Activated CD4-positive, alpha-beta T cell treated with anti-CD3 and anti-CD28 coated beads, Interleukin-2, amount 10 ng/mL, durations not matched to agents 24 days and 14 days (primary cell): ENCODE measurements at regions of chr12 and their contacts with region 1.

Region 1: GRCh38 chr12:27821259-27821973 is 41.4 kb upstream of the MANSC4 start:
- DNase-seq: peak; percentile 85
- H3K4me3 Mint-ChIP-seq: peak overlapping the region; percentile 6
- H3K27ac Mint-ChIP-seq: peak overlapping the region; percentile 87
- H3K4me1 Mint-ChIP-seq: peaks cover 36% of the 10 kb centered on the region
- H3K27me3 Mint-ChIP-seq: peaks cover 52% of the 10 kb centered on the region

Region 2: DNA sequence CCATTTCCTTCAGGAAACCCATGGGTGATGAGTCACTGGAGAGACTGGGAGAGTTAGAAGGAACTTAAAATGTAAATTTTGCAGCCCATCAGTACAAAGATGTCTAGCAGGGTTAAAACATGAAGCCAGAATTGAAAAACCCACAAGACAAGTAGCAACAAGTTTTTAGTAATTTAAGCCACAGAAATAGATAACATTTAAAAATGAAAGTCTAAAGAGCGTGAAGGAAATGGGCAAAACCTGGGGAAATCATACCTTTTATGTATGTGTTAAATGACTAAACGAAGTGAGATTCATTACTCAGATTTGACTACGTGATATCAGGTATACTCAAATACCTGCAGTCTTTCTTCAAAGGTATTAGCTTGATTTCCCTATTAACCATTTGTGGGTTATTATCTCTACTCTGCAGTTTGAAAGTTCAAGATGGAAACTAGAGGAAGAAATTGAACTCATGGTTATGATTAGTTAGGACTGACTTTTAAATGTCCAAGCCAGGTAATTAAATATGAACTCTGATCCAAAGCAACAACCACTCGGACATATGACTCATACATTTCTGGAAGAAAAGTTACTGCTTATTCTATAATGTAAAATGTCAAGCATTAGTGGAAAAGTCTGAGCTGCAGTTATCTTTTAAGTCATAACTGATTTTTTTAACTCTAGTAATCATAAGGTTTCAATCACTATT is 1072.5 kb before region 1 on chr12:
- intact Hi-C with region 1: loop called (anchors 2 kb)
- DNase-seq: no peak
- H3K4me3 Mint-ChIP-seq: peak overlapping the region; percentile 51
- H3K27ac Mint-ChIP-seq: peak overlapping the region; percentile 75
- H3K4me1 Mint-ChIP-seq: peaks cover 50% of the 10 kb centered on the region
- H3K27me3 Mint-ChIP-seq: no peaks in the 10 kb centered on the region

Region 3: DNA sequence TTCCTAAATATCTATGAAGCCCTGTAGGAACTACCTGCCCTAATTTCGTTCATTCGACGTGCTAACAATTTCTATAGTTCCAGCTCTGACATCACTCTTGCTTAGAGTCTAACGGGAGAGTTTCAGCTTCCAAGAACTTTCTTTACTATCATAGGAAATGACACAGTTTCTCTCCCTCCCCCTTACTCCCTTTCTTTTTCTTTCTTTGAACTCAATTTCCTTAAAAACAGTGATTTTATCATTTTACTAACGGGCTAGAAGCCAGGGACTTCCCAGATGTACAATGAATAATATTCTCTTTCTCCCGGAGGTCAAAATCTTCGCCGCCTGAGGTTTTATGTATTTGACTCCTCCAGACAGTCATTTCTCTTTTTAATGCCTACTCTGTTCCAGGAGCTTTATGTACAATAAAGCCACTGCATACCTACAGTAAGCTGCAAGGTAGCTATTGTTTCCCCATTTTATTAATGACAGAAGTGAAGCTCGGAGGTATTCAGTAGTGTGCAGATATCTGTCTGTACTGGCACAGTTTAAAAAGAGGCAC is 359.2 kb before region 1 on chr12:
- intact Hi-C with region 1: loop called (anchors 2 kb)
- DNase-seq: peak; percentile 60
- H3K4me3 Mint-ChIP-seq: peak overlapping the region; percentile 27
- H3K27ac Mint-ChIP-seq: peak overlapping the region; percentile 68
- H3K4me1 Mint-ChIP-seq: peaks cover 58% of the 10 kb centered on the region
- H3K27me3 Mint-ChIP-seq: no peaks in the 10 kb centered on the region

Region 4: DNA sequence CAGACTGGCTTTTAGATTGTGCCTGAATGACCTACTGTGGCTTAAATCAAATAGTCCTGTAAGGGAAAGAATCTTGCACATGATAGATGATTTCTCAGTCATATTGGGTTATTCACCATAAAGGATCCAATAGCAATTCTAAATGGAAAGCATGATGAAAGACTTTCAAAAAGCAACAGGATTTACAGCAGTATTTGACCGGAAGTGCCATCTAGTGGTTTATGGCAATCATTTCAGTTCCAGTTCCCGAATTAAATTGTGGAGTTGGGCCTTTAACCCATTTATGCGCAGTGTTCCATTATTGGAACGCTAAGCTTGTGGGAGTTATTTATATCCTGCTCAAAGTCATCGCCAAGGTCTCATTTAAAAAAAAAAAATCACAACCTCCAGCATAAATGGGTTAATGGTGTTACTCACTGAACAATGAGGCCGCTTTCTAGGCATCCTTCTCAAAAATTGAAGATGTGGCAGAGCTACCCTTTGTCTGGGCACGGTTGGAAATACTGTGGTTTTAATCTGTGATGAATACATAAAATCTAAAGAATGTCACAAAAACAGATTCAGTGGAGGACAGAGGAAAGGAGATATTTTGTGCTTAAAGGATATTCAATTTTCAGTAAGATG is 186.0 kb before region 1 on chr12:
- intact Hi-C with region 1: no loop called
- DNase-seq: peak; percentile 59
- H3K4me3 Mint-ChIP-seq: no peak overlapping the region
- H3K27ac Mint-ChIP-seq: no peak overlapping the region
- H3K4me1 Mint-ChIP-seq: peaks cover 10% of the 10 kb centered on the region
- H3K27me3 Mint-ChIP-seq: peaks cover 2% of the 10 kb centered on the region

Region 5: DNA sequence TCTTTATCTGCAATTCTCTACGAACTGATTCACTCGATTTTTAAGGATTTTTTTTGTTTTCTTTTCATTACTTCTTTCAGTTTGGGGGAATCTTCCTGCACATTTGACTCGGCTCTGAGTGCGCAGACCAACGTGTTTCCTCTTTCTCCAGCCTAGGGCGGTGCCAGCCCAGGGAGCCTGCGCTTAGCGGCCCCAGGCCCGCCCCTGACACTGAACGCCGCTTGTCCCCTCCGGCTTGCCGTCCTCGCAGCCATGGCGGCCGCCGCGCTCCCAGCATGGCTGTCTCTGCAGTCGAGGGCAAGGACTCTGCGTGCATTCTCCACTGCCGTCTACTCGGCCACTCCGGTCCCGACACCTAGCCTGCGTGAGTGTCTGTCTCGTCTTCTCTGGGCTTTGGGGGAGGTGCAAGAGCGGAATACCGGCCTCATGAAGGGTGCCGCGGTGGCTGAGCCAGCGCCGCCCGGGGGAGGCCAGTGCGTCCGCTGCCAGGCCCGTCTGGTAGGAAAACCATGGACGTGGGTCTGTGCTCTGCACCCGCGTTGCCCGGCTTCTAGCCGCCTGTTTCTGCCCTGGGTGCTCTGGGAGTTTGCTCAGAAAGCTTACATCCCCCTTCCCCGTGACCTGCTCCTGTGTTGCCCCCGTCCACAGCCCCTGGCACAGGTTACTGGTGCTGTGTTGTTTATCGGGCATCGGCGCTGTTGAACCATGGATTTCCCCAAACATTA is 110.7 kb before region 1 on chr12 and contains the start of gene MRPS35:
- intact Hi-C with region 1: loop called (anchors 1 kb)
- DNase-seq: peak; percentile 98
- H3K4me3 Mint-ChIP-seq: peak within 1 kb of the TSS; percentile 95
- H3K27ac Mint-ChIP-seq: peak within 1 kb of the TSS; percentile 91
- H3K4me1 Mint-ChIP-seq: peaks cover 31% of the 10 kb centered on the region
- H3K27me3 Mint-ChIP-seq: peaks cover 9% of the 10 kb centered on the region
- total RNA-seq, gene MRPS35: 57.7 and 58.1 TPM in 2 replicates

Region 6: DNA sequence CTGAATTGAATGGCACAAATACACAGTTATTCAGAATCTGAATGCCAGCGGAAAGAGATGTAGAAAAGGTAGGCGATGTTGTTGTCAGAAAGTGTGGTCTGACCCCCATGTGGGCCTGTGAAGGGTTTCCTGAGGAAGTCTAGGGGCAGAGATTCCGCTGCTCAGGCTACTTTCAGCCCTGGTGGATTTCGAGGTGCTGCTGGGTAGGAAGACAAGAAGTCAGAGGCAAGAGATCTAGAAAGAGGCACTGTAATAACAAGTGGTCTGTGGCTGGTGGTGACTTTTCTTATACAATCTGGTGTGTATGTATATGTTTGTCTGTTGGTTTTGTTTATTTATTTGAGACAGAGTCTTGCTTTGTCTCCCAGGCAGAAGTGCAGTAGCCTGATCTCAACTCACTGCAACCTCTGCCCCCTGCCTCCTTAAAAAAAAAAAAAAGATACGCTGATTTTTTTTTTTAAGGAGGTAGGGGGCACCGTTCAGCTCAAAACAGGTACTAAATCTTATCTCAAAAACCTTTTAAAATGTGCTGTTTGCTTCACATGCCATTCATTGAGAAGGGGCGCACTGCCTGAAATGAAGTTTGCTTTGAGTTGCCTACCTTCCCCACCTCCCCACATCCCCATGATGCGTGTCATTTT is 14.2 kb before region 1 on chr12:
- intact Hi-C with region 1: loop called (anchors 1 kb)
- DNase-seq: peak; percentile 65
- H3K4me3 Mint-ChIP-seq: peak overlapping the region; percentile 3
- H3K27ac Mint-ChIP-seq: peak overlapping the region; percentile 43
- H3K4me1 Mint-ChIP-seq: peaks cover 17% of the 10 kb centered on the region
- H3K27me3 Mint-ChIP-seq: peaks cover 10% of the 10 kb centered on the region

Region 7: GRCh38 chr12:28190321-28191050 is 369.1 kb after region 1 on chr12 and contains the start of gene CCDC91:
- intact Hi-C with region 1: loop called (anchors 2 kb)
- DNase-seq: peak; percentile 95
- H3K4me3 Mint-ChIP-seq: peak within 1 kb of the TSS; percentile 95
- H3K27ac Mint-ChIP-seq: peak within 1 kb of the TSS; percentile 99
- H3K4me1 Mint-ChIP-seq: peaks cover 32% of the 10 kb centered on the region
- H3K27me3 Mint-ChIP-seq: no peaks in the 10 kb centered on the region
- total RNA-seq, gene CCDC91: 12.0 and 15.4 TPM in 2 replicates

Region 8: DNA sequence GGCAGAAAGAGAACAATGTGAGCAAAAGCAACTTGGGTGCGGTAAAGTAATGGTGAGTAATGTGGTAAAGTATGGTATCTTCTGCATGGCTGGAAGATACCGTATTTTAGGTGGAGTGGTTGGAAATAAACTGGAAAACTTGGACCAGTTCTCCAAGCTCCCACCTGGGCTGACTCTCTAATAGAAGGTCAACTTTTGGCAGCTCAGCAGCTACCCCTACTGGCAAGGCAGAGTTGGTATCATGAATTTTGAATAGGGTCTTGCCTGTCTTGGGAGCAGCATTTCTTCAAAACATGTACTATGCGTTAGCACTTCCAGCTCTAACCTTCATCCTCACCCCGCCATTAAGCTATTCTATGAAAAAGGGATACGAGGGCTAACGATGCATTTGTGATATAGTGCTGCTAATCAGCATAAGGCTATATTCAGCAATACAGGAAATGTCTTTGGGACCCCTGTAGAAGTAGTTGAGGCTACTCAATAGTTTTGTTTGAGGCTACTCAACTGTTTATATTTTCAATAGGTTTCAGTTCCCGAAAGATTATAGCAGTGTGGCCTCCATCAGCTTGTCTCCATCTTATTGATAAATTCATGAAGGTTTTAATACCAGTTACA is 1051.3 kb after region 1 on chr12:
- intact Hi-C with region 1: loop called (anchors 5 kb)
- DNase-seq: peak; percentile 63
- H3K4me3 Mint-ChIP-seq: no peak overlapping the region
- H3K27ac Mint-ChIP-seq: no peak overlapping the region
- H3K4me1 Mint-ChIP-seq: no peaks in the 10 kb centered on the region
- H3K27me3 Mint-ChIP-seq: no peaks in the 10 kb centered on the region